Common myeloid progenitor, CD34-positive (primary cell): ENCODE measurements at regions of chr19 and their contacts with region 1.

Region 1: GRCh38 chr19:12495002-12495802 is 10.6 kb upstream of the ZNF709 start:
- DNase-seq: peak; percentile 96 to 98 (median 98)
- H3K4me3 ChIP-seq: peak overlapping the region; percentile 67 to 85 (median 78)
- H3K27ac ChIP-seq: peak overlapping the region; percentile 76 to 80
- H3K4me1 ChIP-seq: peaks cover 0 to 12% (median 10%) of the 10 kb centered on the region in 4 experiments
- H3K27me3 ChIP-seq: no peaks in the 10 kb centered on the region

Region 2: GRCh38 chr19:12255372-12255771 is 239.8 kb before region 1 on chr19:
- CTCF ChIA-PET with region 1: no interaction called
- POLR2A ChIA-PET with region 1: no interaction called
- DNase-seq: no peak
- H3K4me3 ChIP-seq: no peak overlapping the region
- H3K27ac ChIP-seq: no peak overlapping the region
- H3K4me1 ChIP-seq: no peaks in the 10 kb centered on the region
- H3K27me3 ChIP-seq: no peaks in the 10 kb centered on the region

Region 3: GRCh38 chr19:12484371-12485051 is 10.7 kb before region 1 on chr19 and contains the start of gene ZNF709:
- CTCF ChIA-PET with region 1: interaction called, 25 read pairs
- POLR2A ChIA-PET with region 1: interaction called, 16 read pairs
- DNase-seq: peak; percentile 90 to 94 (median 93)
- H3K4me3 ChIP-seq: peak within 1 kb of the TSS; percentile 71 to 93 (median 87)
- H3K27ac ChIP-seq: peak within 1 kb of the TSS; percentile 70 to 86
- H3K4me1 ChIP-seq: peaks cover 10 to 45% (median 34%) of the 10 kb centered on the region in 4 experiments
- H3K27me3 ChIP-seq: no peaks in the 10 kb centered on the region